Mammary epithelial cell (primary cell): ENCODE measurements at regions of chr7 and their contacts with region 1.

Region 1: DNA sequence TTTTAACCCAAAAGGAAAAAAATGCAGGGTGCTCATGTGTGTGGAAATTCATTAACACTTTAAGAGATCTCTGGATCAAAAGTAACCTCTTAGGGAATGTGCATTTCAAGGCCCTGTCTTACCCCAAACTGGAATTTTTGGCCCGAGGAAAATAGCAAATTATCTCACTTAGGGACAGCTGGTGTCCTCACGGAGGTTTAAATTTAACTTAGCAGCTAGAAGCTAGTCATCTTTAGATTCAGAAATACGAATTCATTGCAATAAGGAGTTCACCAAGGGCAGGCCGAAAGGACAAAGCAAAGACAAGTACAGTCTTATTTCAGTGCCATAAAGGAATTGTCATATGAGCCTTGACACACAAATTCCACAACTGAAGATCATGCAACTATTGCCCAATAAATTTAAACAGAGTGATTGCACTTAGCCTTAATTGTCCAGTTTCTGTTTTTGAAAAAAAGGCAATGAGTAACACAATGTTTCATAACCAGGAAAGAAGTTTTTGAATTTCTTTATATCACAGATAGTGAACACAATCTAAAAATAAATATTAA is 22.4 kb upstream of the SEMA3C start:
- DNase-seq: peak; percentile 93
- H3K4me3 ChIP-seq: no peak overlapping the region
- H3K27ac ChIP-seq: peak overlapping the region; percentile 98
- H3K4me1 ChIP-seq: peaks cover 30% of the 10 kb centered on the region
- H3K27me3 ChIP-seq: no peaks in the 10 kb centered on the region
- CTCF ChIP-seq: no peak

Region 2: GRCh38 chr7:80740778-80741545 is 200.3 kb before region 1 on chr7:
- CTCF ChIA-PET with region 1: no interaction called
- dilution Hi-C with region 1: no loop called
- in situ Hi-C with region 1: no loop called
- intact Hi-C with region 1: no loop called
- DNase-seq: no peak
- H3K4me3 ChIP-seq: no peak overlapping the region
- H3K27ac ChIP-seq: no peak overlapping the region
- H3K4me1 ChIP-seq: peaks cover 10% of the 10 kb centered on the region
- H3K27me3 ChIP-seq: no peaks in the 10 kb centered on the region
- CTCF ChIP-seq: no peak

Region 3: DNA sequence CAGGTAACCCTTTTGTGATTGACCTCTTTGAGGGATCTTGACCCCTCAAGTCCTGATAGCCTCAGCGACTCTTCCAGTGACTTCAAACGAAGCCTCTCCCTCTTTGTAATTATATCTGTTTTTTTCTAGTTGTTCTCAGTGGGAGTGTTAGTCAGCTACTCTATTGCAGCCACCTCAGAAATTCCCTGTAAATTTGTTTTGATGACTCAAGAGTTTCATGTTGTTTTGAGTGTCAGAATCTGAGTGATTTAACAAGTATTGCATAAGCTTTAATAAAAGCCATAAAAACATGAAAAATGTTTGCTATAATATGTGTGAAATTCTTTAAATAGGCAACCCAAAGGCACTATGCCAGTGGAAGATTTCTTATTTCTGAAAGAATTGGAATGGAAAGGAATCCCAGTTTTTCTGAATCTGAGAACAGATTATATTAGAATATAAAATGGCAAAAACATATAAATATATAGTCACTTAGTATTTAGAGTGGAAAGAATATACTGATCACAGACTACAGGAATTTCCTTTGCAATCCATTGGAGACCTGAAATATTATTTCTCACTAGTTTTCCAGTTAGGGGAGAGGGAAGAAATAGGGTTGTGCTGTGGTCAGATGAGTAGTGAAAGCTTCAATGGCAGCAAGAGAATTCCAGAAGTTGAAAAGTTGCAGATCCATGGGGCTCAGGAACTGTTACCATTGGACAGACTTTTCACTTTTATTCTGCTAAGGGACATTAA is 72.0 kb after region 1 on chr7:
- CTCF ChIA-PET with region 1: no interaction called
- dilution Hi-C with region 1: no loop called
- in situ Hi-C with region 1: no loop called
- intact Hi-C with region 1: loop called (anchors 1 kb)
- DNase-seq: peak; percentile 92
- H3K4me3 ChIP-seq: no peak overlapping the region
- H3K27ac ChIP-seq: peak overlapping the region; percentile 82
- H3K4me1 ChIP-seq: peaks cover 17% of the 10 kb centered on the region
- H3K27me3 ChIP-seq: no peaks in the 10 kb centered on the region
- CTCF ChIP-seq: no peak

Region 4: DNA sequence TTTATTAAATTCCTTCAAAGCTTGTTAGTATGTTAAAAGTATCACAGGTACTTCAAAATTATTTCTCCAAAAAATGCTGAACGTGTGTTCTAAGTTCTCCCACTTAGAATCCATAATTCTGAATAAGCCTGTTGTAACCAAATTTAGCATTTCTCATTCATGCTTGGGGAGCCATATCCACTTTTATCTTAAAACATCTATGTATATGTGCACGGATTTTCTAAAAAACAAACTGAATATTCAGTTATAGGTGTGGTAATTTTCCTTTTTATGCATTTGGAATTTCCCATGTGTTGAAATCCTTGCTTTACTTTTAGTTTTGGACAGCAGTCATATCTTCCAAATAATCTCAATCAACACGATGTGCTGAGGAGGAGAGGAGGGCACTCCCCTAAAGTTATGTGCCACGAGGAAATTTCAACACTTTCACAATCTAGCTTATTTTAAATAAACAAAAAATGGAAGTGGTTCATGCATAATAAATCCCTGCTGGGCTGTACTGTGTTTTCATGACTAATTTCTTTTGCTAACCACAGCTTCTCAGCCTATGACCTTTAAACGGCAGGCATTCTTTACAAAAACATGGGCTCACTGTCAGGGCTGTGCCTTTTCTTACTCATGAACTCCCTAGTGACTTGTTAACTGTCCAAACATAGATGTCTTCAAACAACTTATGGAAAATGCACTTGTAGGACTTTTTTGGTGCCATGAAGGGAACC is 357.8 kb after region 1 on chr7:
- CTCF ChIA-PET with region 1: no interaction called
- dilution Hi-C with region 1: no loop called
- in situ Hi-C with region 1: no loop called
- intact Hi-C with region 1: loop called (anchors 10 kb)
- DNase-seq: peak; percentile 97
- H3K4me3 ChIP-seq: no peak overlapping the region
- H3K27ac ChIP-seq: peak overlapping the region; percentile 84
- H3K4me1 ChIP-seq: peaks cover 22% of the 10 kb centered on the region
- H3K27me3 ChIP-seq: no peaks in the 10 kb centered on the region
- CTCF ChIP-seq: no peak